ENCODE measurements at regions of chr7 and their contacts with region 1.

Region 1: DNA sequence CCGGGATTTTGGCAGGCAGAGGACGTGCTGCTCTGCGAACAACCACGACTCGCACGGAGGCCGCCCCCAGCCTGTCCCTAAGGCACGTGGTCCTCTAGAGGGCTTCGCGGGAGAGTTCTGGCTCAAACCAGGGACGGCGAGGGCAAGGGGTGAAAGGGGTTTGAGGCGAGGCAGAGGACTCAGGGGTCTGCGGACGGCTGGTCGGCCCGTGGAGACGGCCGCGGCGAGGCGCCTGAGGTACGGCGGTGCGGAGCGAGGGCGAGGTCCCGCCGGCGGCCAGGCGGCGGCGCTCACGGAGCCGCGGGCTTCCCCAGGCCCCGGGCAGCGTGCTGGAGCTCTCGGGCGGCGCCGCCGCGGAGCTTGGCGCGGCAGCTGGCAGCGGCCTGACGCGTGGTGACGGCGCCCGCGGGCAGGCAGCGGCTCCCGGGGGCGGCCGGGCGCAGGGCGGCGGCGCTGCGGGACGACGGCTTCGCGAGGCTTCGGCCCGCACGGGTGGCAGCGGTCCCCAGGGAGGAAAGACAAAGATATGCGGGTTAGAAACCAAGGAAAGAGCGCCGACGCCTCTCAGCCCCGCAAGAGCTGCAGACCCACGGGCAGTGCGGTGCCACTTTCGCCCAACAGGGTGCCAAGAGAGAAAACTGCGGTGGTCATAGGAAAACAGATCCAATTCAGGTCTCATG is 44.8 kb downstream of the ZNF800 start:
- DNase-seq: peak; percentile 88
- CTCF ChIP-seq: peak; percentile 80

Region 2: GRCh38 chr7:127365164-127365956 is 17.7 kb after region 1 on chr7:
- CTCF ChIA-PET with region 1: interaction called, 17 read pairs
- POLR2A ChIA-PET with region 1: no interaction called
- DNase-seq: no peak
- CTCF ChIP-seq: no peak

Region 3: DNA sequence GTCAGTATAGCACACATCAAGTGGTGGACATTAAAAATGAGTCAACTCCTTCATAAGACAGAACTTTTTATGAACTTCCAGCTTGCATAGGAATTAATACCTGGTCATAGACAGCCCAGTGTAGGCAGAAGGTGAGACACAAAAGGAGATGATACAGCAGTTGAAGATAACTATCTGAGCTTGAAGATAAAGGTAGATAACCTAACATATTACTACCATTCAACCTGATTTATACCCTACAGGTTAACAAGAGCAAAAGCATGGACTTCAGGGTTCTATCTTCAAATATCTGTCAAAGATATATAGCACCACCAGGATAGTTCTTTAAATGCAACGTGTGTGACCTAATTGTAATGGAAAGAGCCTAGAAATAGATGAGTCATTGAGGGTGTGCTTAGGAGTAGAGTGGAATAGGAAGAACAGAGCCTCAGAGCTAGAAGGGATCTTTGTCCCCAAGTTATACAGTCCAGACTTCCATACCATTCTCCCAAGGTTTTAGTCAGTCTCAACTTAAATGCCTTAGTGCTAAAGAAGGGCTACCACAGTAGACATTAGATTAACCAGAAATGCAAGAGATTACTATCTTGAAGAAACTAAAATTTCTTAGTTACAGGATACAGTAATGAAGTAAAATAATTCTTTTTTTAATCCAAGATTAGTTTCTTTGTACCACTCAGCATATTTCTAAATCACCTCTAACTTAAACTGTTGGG is 35.6 kb after region 1 on chr7:
- CTCF ChIA-PET with region 1: interaction called, 11 read pairs
- POLR2A ChIA-PET with region 1: no interaction called
- DNase-seq: no peak
- CTCF ChIP-seq: no peak

Region 4: DNA sequence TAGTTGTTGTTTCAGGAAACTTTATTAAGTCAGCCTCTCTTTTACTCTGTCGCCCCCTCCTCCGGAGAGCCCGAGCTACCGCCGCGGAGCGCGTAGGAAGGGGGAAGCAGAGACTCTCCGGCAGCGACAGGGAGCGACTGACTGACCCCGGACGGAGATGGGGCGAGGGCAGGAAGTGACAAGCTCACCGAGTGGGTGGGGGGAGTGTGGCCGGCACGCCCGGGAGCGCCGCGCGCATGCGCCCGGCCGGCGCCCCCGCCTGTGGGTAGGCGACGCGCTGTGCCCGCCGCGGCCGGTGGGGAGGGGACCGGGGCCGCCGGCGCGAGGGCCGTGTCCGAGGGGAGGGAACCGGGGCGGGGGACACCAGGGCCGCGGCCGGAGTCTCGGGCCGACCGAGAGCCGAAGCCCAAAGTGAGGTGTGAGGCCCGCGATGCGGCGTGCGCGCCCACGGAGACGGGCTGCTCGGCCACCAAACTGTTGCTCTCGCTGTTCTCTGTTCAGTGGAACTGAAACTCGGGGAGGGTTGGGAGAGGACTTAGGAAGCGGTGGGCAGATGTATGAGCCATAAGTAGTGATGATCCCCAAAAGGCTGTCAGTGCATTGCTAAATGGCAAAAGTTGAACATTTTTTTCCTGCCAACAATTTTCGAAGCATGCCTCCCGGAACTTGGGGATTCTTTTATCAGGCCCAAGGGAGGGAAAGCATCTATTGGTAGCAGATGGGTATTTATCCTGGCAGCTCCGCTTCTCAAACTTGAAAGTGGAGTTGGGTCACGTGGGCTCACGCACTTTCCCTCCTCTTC is 45.1 kb after region 1 on chr7 and contains the start of gene ZNF800:
- CTCF ChIA-PET with region 1: interaction called, 12 read pairs
- POLR2A ChIA-PET with region 1: no interaction called
- DNase-seq: peak; percentile 97
- CTCF ChIP-seq: no peak

Region 5: GRCh38 chr7:127447326-127447945 is 99.7 kb after region 1 on chr7:
- CTCF ChIA-PET with region 1: interaction called, 73 read pairs
- POLR2A ChIA-PET with region 1: no interaction called
- DNase-seq: peak; percentile 63
- CTCF ChIP-seq: peak; percentile 91

Measured in GM10248 (cell line).